IMR-90 (cell line): ENCODE measurements at regions of chr18 and their contacts with region 1.

Region 1: GRCh38 chr18:70442933-70443332 is 154.1 kb downstream of the SOCS6 start:
- DNase-seq: no peak
- ATAC-seq: no peak
- H3K4me3 ChIP-seq: no peak overlapping the region
- H3K27ac ChIP-seq: no peak overlapping the region
- H3K4me1 ChIP-seq: no peaks in the 10 kb centered on the region
- H3K27me3 ChIP-seq: no peaks in the 10 kb centered on the region
- CTCF ChIP-seq: no peak
- POLR2A ChIP-seq: no peak
- RAD21 ChIP-seq: no peak

Region 2: DNA sequence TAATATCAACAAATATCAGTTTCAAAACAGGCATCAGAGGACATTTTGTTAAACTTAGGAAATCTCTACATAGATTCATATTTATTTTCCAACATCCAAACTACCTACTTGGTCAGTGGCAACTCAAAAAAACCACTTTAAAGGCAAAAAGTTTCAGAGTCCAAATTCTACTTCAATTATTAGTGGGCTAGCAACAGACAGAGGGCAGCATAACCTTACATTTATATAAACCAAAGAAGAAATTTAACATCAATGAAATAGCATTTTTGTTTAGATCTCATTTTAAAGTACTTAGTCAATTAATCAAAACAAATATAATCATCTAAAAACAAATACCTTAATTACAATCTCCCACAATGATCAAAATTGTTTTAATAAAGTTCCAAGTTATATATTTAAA is 270.7 kb before region 1 on chr18:
- CTCF ChIA-PET with region 1: interaction called, 3 read pairs
- POLR2A ChIA-PET with region 1: interaction called, 15 read pairs
- dilution Hi-C with region 1: loop called (anchors 25 kb)
- in situ Hi-C with region 1: no loop called
- intact Hi-C with region 1: no loop called
- DNase-seq: peak; percentile 39
- ATAC-seq: peak; percentile 48; the same call in 1 of the 2 replicates
- H3K4me3 ChIP-seq: no peak overlapping the region
- H3K27ac ChIP-seq: no peak overlapping the region
- H3K4me1 ChIP-seq: no peaks in the 10 kb centered on the region; the same call in 1 of the 2 replicates
- H3K27me3 ChIP-seq: no peaks in the 10 kb centered on the region
- CTCF ChIP-seq: peak; percentile 66
- POLR2A ChIP-seq: no peak
- RAD21 ChIP-seq: peak; percentile 67

Region 3: GRCh38 chr18:70249118-70249517 is 193.8 kb before region 1 on chr18:
- CTCF ChIA-PET with region 1: no interaction called
- POLR2A ChIA-PET with region 1: no interaction called
- dilution Hi-C with region 1: no loop called
- in situ Hi-C with region 1: no loop called
- intact Hi-C with region 1: no loop called
- DNase-seq: peak; percentile 61
- ATAC-seq: peak; percentile 66
- H3K4me3 ChIP-seq: no peak overlapping the region
- H3K27ac ChIP-seq: no peak overlapping the region
- H3K4me1 ChIP-seq: no peaks in the 10 kb centered on the region
- H3K27me3 ChIP-seq: no peaks in the 10 kb centered on the region
- CTCF ChIP-seq: no peak
- POLR2A ChIP-seq: no peak
- RAD21 ChIP-seq: no peak